Heart right ventricle (tissue), 16 donors: ENCODE measurements at regions of chr12 and their contacts with region 1.

Region 1: DNA sequence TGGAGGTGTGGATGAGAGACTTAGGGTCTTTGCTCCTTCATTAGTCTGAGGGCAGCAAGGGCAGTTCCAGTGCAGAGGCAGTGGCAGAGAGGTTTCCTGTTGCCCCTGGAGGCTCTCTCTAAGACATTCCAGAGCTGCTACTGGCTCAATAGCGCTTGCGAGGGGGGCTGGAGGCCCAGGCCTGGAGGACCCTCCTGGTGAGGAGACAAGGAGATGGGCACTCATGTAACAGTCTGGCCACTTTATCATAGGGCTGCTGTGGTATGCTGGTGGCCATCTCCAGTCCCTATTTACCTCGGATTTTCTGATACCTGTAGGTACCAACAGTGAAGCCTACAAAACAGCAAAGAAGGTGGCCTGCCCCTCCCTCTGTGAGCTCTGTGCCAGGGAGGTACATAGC is 12.7 kb downstream of the CLEC2A start:
- DNase-seq: no peak
- ATAC-seq: no peak
- H3K4me3 ChIP-seq: no peak overlapping the region
- H3K27ac ChIP-seq: no peak overlapping the region
- H3K4me1 ChIP-seq: no peaks in the 10 kb centered on the region
- H3K27me3 ChIP-seq: peaks cover 0 to 3% (median 0%) of the 10 kb centered on the region in 7 donors
- CTCF ChIP-seq: no peak

Region 2: DNA sequence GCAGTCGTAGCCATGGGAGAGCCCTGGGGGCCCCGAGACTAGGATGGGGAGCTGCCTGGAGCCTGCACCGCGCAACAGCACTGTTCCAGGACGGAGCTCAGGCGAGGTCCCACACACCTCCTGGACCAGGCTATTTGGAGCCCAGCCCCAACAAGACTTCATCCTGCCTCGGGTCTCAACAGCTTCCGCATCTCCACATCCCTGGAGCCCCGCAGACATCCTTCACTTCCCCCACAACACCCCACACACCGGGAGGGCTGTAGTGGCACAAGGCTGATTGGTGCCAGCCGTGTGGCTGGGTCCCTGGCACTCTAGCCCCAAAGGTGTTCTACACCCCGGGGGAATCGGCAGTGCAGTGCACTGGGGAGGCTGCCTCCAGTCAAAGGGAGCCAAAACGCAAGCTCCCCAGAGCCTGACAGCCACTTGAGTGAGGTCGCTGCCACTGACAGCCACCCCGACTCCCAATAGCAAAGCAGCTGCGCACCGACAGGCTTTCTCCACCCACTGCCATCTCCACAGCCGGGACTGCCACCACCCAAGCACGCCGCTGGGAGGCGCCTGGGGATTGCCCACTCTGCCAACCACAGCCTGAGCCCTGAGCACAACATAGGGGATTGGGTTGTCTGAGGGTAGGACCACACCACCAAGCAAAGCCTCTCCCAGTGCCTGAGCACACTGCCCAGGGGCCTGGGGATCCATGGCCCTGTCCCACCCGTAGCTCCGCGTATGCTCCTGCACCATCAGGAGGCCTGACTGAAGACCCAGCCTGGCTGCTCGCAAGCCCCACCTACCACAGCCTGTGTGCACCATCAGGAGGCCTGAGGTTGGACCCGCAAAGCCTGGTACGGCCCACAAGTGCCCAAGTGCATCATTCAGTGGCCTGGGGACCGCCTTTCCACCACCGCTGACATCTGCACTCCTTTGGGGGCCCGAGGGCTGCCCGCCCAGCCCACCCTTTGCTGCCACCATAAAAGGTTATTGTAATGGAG is 105.3 kb before region 1 on chr12:
- intact Hi-C with region 1: loop called in 3 of 10 experiments (anchors 5 to 10 kb)
- DNase-seq: peak; percentile 72 to 79
- ATAC-seq: peak; percentile 80 to 95 (median 90)
- H3K4me3 ChIP-seq: peak overlapping the region in 7 of 10 donors; percentile 19 to 50 (median 41)
- H3K27ac ChIP-seq: no peak overlapping the region
- H3K4me1 ChIP-seq: peaks cover 0 to 17% (median 0%) of the 10 kb centered on the region in 9 donors
- H3K27me3 ChIP-seq: peaks cover 0 to 11% (median 0%) of the 10 kb centered on the region in 7 donors
- CTCF ChIP-seq: peak; percentile 55 to 79 (median 71)